ENCODE measurements at regions of chr12 and their contacts with region 1.

Region 1: GRCh38 chr12:68119724-68120211 is 39.8 kb downstream of the IFNG start:
- DNase-seq: peak; percentile 83
- H3K4me3 Mint-ChIP-seq: no peak overlapping the region
- H3K27ac Mint-ChIP-seq: peak overlapping the region; percentile 43
- H3K4me1 Mint-ChIP-seq: peaks cover 33% of the 10 kb centered on the region
- H3K27me3 Mint-ChIP-seq: no peaks in the 10 kb centered on the region

Region 2: GRCh38 chr12:67220065-67220464 is 899.7 kb before region 1 on chr12:
- CTCF ChIA-PET with region 1: no interaction called
- intact Hi-C with region 1: no loop called
- DNase-seq: peak; percentile 13
- H3K4me3 Mint-ChIP-seq: no peak overlapping the region
- H3K27ac Mint-ChIP-seq: no peak overlapping the region
- H3K4me1 Mint-ChIP-seq: no peaks in the 10 kb centered on the region
- H3K27me3 Mint-ChIP-seq: no peaks in the 10 kb centered on the region

Region 3: GRCh38 chr12:67853204-67853603 is 266.6 kb before region 1 on chr12:
- CTCF ChIA-PET with region 1: no interaction called
- intact Hi-C with region 1: no loop called
- DNase-seq: no peak
- H3K4me3 Mint-ChIP-seq: no peak overlapping the region
- H3K27ac Mint-ChIP-seq: no peak overlapping the region
- H3K4me1 Mint-ChIP-seq: no peaks in the 10 kb centered on the region
- H3K27me3 Mint-ChIP-seq: no peaks in the 10 kb centered on the region

Region 4: GRCh38 chr12:68137335-68137830 is 17.6 kb after region 1 on chr12:
- CTCF ChIA-PET with region 1: no interaction called
- intact Hi-C with region 1: loop called (anchors 1 kb)
- DNase-seq: peak; percentile 38
- H3K4me3 Mint-ChIP-seq: no peak overlapping the region
- H3K27ac Mint-ChIP-seq: peak overlapping the region; percentile 91
- H3K4me1 Mint-ChIP-seq: peaks cover 52% of the 10 kb centered on the region
- H3K27me3 Mint-ChIP-seq: no peaks in the 10 kb centered on the region

Region 5: DNA sequence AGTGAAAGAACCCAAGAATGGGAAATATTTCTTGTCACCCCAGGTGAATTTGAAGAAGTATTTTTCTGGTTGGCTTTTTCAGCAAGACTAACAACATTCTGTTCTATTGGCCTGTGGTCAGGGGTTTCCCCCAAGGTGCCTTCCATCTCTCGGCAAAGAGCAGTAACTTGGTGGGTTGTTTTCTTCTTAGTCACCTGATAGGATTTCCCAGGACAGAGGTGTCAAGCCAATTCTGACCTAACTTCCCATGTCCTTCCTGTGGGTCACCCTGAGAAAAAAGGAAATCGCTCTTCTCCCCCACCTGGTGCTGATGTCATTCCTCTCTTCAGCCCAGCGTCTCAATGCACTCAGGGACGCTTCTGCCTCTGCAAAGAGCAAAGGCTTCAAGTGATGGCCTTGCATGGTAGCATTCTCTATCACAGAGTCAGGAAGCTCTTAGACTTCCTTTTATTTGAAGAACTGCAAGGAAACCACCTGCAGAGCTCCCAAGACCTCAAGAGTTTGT is 55.8 kb after region 1 on chr12:
- CTCF ChIA-PET with region 1: no interaction called
- intact Hi-C with region 1: loop called (anchors 1 kb)
- DNase-seq: peak; percentile 87
- H3K4me3 Mint-ChIP-seq: peak overlapping the region; percentile 62
- H3K27ac Mint-ChIP-seq: peak overlapping the region; percentile 89
- H3K4me1 Mint-ChIP-seq: peaks cover 78% of the 10 kb centered on the region
- H3K27me3 Mint-ChIP-seq: no peaks in the 10 kb centered on the region

Region 6: GRCh38 chr12:68364893-68365725 is 245.3 kb after region 1 on chr12:
- CTCF ChIA-PET with region 1: no interaction called
- intact Hi-C with region 1: loop called (anchors 5 kb)
- DNase-seq: peak; percentile 90
- H3K4me3 Mint-ChIP-seq: peak overlapping the region; percentile 79
- H3K27ac Mint-ChIP-seq: peak overlapping the region; percentile 90
- H3K4me1 Mint-ChIP-seq: peaks cover 57% of the 10 kb centered on the region
- H3K27me3 Mint-ChIP-seq: no peaks in the 10 kb centered on the region

Region 7: DNA sequence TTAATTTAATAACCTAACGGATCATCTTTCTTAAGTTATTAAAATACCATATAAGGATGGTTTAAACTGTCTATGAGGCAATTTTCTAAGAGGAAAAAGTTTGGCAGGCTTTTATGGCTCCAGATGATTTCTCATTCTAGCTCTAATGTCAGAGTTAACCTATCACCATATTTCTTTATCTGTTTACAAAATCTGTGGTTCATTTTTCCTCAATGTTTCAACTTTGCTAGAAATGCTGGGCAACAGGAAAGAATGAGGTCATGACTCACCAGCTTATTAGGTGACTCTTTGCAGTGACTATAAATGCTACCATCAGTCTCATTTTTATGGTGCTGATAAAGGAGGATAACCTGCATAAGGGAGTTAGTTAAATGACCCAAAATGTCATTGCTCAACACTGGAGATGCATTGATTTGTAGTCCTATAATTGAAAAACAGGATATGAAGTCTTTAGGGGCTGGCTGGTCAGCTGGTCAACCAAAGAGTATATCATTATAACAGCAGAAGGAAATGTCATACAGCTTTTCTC is 445.7 kb after region 1 on chr12:
- CTCF ChIA-PET with region 1: no interaction called
- intact Hi-C with region 1: no loop called
- DNase-seq: no peak
- H3K4me3 Mint-ChIP-seq: no peak overlapping the region
- H3K27ac Mint-ChIP-seq: no peak overlapping the region
- H3K4me1 Mint-ChIP-seq: peaks cover 22% of the 10 kb centered on the region
- H3K27me3 Mint-ChIP-seq: no peaks in the 10 kb centered on the region